Heart left ventricle (tissue), 16 donors: ENCODE measurements at regions of chr7 and their contacts with region 1.

Region 1: GRCh38 chr7:876167-876967 is at the start of gene GET4:
- DNase-seq: peak; percentile 96 to 99 (median 98)
- ATAC-seq: peak; percentile 73 to 84 (median 80)
- H3K4me3 ChIP-seq: peak within 1 kb of the TSS; percentile 67 to 98 (median 86)
- H3K27ac ChIP-seq: peak within 1 kb of the TSS; percentile 69 to 95 (median 89)
- H3K4me1 ChIP-seq: peaks cover 10 to 67% (median 45%) of the 10 kb centered on the region in 12 donors
- H3K27me3 ChIP-seq: no peaks in the 10 kb centered on the region
- CTCF ChIP-seq: peak in 9 of 12 donors; percentile 23 to 57 (median 32)
- POLR2A ChIP-seq: peak; percentile 48 to 78
- total RNA-seq, gene GET4: 14.6 to 27.3 (median 18.6) TPM

Region 2: DNA sequence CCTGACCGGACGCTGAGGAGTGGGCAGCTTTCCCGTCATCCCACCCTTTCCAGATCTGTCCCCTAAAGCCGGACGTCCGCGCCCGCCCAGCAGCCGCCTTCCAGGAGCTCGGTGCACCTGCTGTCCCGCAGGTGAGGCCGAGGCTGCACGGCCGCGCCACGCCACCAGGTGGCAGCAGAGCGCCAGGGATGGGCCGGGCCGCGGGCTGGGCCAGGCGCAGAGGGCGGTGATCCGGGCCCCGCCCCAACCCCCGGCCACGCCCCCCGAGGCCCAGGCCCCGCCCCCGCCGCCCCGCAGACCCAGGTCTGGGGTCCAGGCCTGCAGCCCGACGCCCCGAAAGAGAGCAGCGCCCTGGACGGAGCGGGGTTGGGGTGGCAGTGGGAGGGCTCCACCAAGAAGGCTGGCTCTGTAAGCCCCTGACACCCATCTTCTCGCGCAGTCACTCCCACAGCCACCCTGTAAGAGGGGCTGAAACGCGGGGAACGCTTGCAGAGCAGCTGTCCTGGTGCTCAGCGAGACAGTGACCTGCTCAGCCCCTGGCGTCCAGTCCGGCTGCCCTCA is 554.2 kb before region 1 on chr7:
- intact Hi-C with region 1: loop called in 4 of 10 experiments (anchors 2 to 10 kb)
- DNase-seq: peak; percentile 46 to 86 (median 61)
- ATAC-seq: peak; percentile 61 to 89 (median 74)
- H3K4me3 ChIP-seq: peak overlapping the region in 3 of 12 donors; percentile 19 to 25 (median 22)
- H3K27ac ChIP-seq: no peak overlapping the region
- H3K4me1 ChIP-seq: peaks cover 0 to 23% (median 0%) of the 10 kb centered on the region in 12 donors
- H3K27me3 ChIP-seq: peaks cover 0 to 13% (median 0%) of the 10 kb centered on the region in 9 donors
- CTCF ChIP-seq: peak; percentile 82 to 99 (median 94)
- POLR2A ChIP-seq: no peak

Region 3: DNA sequence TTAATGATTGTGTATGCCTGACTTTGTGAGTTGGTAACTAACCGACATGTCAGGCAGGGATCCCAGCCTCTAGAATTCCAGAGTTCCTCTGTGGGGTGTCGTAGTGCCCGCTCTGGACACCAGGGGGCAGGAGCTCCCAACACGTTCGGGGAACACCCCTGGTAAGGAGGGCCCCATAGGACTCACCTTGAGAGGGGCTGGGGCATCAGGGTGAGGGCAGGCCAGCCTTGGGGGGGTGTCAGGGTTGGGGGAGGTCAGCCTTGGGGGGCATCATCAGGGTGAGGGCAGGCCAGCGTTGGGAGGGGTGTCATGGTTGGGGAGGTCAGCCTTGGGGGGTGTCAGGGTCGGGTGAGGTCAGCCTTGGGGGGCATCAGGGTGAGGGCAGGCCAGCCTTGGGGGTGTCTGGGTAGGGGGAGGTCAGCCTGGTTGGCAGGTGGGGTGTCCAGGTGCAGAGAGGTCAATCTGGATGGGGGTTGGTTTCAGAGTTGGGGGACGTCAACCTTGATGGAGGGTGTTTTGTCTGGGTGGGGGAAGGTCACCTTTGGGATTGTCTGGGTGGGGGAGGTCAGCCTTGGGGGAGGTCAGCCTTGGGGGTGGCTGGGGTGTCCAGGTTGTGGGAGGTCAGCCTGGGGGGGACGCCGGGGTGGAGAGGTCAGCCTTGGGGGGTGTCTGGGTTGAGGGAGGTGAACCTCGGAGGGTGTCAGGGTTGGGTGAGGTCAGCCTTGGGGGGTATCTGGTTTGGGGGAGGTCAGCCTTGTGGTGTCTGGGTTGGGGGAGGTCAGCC is 89.7 kb before region 1 on chr7:
- intact Hi-C with region 1: loop called in 9 of 10 experiments (anchors 1 to 2 kb)
- DNase-seq: peak in 4 of 5 donors; percentile 65 to 77 (median 69)
- ATAC-seq: peak; percentile 53 to 82 (median 79)
- H3K4me3 ChIP-seq: no peak overlapping the region
- H3K27ac ChIP-seq: peak overlapping the region in 1 of 12 donors; percentile 2
- H3K4me1 ChIP-seq: peaks cover 0 to 7% (median under 1%) of the 10 kb centered on the region in 12 donors
- H3K27me3 ChIP-seq: no peaks in the 10 kb centered on the region
- CTCF ChIP-seq: peak; percentile 67 to 92 (median 77)
- POLR2A ChIP-seq: no peak

Region 4: GRCh38 chr7:816300-816750 is 60.0 kb before region 1 on chr7:
- intact Hi-C with region 1: loop called in 6 of 10 experiments (anchors 2 to 5 kb)
- DNase-seq: peak; percentile 98 to 99 (median 99)
- ATAC-seq: peak; percentile 89 to 96 (median 92)
- H3K4me3 ChIP-seq: peak overlapping the region in 11 of 12 donors; percentile 61 to 99 (median 77)
- H3K27ac ChIP-seq: peak overlapping the region in 11 of 12 donors; percentile 50 to 97 (median 80)
- H3K4me1 ChIP-seq: peaks cover 4 to 75% (median 55%) of the 10 kb centered on the region in 12 donors
- H3K27me3 ChIP-seq: no peaks in the 10 kb centered on the region
- CTCF ChIP-seq: no peak
- POLR2A ChIP-seq: peak; percentile 75 to 81

Region 5: DNA sequence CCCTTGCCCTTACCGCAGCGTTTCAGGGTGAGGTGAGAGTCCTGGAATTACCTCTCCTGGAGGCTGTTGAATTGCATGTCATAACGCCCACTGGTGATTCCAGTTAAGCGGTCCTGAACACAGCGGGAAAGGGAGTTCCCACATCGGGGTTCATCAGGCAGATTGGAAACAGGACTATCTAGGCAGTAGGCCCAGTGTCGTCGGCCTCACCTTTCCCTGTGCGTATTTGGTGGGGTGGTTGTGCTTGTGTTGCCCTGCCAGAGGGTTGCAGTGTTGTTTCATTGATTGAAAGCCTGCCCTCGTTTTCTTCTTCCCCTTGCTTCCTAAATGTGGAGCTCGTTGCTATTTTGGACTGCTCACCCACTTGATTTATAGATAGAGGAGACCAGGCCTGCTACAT is 54.7 kb before region 1 on chr7:
- intact Hi-C with region 1: loop called in 6 of 10 experiments (anchors 2 to 5 kb)
- DNase-seq: peak in 2 of 5 donors; percentile 44 to 50
- ATAC-seq: peak; percentile 32 to 78 (median 74)
- H3K4me3 ChIP-seq: no peak overlapping the region
- H3K27ac ChIP-seq: peak overlapping the region in 9 of 12 donors; percentile 54 to 81 (median 72)
- H3K4me1 ChIP-seq: peaks cover 0 to 92% (median 63%) of the 10 kb centered on the region in 12 donors
- H3K27me3 ChIP-seq: no peaks in the 10 kb centered on the region
- CTCF ChIP-seq: peak in 8 of 12 donors; percentile 10 to 46 (median 30)
- POLR2A ChIP-seq: no peak

Region 6: GRCh38 chr7:831596-832166 is 44.7 kb before region 1 on chr7:
- intact Hi-C with region 1: loop called in 7 of 10 experiments (anchors 5 kb)
- DNase-seq: no peak
- ATAC-seq: peak; percentile 66 to 83 (median 72)
- H3K4me3 ChIP-seq: peak overlapping the region in 11 of 12 donors; percentile 2 to 48 (median 36)
- H3K27ac ChIP-seq: peak overlapping the region; percentile 80 to 99 (median 94)
- H3K4me1 ChIP-seq: peaks cover 26 to 94% (median 67%) of the 10 kb centered on the region in 12 donors
- H3K27me3 ChIP-seq: no peaks in the 10 kb centered on the region
- CTCF ChIP-seq: no peak
- POLR2A ChIP-seq: no peak

Region 7: DNA sequence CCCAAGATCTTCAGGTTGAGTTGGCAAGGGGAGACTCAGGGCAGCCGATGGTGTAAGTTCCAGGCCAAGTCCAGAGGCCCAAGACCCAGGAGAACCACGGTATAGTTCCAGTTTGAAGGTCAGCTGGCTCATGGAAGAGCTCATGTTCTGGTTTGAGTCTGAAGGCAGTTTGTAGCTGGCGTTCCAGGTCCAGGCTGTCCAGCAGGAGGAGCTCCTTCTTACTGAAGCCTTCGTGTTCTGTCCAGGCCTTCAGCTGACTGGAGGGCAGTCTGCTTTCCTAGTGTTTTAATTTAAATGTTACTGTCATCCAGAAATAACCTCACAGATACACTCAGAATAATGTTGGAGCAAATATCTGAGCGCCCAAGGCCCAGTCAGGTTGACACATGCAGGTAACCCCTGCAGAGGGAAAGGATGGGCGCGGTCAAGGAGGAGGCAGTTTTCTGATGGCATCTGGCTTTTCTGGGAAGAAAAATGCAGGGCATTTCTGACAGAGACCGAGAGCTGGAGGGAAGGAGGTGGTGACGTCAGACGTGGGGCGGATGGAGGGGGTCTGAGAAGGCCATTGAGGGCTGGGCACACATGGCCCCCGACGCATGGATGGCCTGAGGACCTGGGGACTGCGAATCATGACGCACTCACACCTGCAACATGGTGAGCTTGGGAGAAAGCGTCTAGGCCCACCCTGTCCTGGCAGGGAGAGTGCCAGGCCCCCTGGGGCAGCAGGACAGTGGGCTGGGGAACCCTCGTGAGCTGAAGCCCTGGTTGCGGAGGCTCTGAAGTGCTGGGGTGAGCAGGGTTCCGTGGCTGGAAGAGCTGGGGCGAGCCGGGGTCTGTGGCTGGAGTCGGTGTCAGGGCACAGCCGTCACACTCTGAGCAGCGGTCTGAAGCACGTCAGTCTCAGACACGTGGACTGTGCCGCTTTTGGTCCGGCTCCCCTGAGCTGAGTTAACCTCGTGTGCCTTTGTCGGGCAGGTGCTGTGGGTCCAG is 39.7 kb before region 1 on chr7:
- intact Hi-C with region 1: loop called in 7 of 10 experiments (anchors 5 kb)
- DNase-seq: peak in 2 of 5 donors; percentile 52 to 68
- ATAC-seq: peak; percentile 50 to 75 (median 69)
- H3K4me3 ChIP-seq: no peak overlapping the region
- H3K27ac ChIP-seq: peak overlapping the region in 11 of 12 donors; percentile 52 to 97 (median 82)
- H3K4me1 ChIP-seq: peaks cover 17 to 74% (median 52%) of the 10 kb centered on the region in 12 donors
- H3K27me3 ChIP-seq: no peaks in the 10 kb centered on the region
- CTCF ChIP-seq: peak; percentile 22 to 65 (median 44)
- POLR2A ChIP-seq: no peak

Region 8: DNA sequence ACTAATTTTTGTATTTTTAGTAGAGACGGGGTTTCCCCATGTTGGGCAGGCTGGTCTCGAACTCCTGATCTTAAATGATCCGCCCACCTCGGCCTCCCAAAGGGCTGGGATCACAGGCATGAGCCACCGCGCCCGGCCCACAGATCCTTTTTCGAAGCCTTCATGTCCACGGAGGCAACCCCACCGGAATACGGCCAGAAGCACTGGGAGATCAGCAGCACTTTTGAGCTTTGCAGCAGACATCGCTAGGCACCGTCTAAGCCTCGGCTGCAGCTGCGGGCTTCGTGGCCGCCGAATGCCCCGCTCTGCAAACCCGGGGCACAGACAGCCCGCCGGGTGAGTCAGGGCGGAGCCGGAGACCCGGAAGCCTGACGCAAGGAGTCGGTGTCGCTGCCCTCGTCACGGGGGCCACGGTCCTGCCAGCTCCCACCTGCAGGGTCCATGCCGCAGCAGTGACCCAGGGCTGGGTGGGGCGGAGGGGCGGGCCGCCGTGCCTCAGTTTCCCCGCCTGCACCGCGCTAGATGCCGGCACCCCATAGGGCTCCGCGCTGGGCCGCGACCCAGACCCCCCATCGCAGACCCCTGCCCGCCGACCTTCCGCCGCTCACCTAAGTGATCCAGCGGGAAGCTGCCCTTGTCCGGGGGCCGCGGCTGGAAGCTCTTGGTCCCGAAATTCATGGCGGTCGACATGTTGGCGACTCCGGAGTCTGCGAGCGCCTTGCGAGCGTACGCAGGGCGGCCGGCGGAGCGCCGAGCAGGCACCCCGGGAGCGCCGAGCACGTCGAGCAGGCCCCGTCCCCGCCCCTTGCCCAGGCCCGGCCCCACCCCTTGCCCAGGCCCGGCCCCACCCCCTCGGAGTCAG is 98.7 kb after region 1 on chr7 and contains the start of gene COX19:
- intact Hi-C with region 1: no loop called
- DNase-seq: peak; percentile 89 to 95 (median 91)
- ATAC-seq: peak; percentile 91 to 98 (median 95)
- H3K4me3 ChIP-seq: peak within 1 kb of the TSS; percentile 71 to 100 (median 98)
- H3K27ac ChIP-seq: peak within 1 kb of the TSS; percentile 85 to 99 (median 96)
- H3K4me1 ChIP-seq: peaks cover 3 to 36% (median 25%) of the 10 kb centered on the region in 12 donors
- H3K27me3 ChIP-seq: no peaks in the 10 kb centered on the region
- CTCF ChIP-seq: no peak
- POLR2A ChIP-seq: peak in 1 of 2 donors; percentile 67
- total RNA-seq, gene COX19: 3.1 to 7.8 (median 6.5) TPM